WTC11 (cell line): ENCODE measurements at regions of chr2 and their contacts with region 1.

Region 1: GRCh38 chr2:25309402-25309801 is 32.3 kb downstream of the DNMT3A start:
- DNase-seq: peak; percentile 78
- ATAC-seq: peak; percentile 57
- H3K4me3 Mint-ChIP-seq: no peak overlapping the region
- H3K27ac Mint-ChIP-seq: 0 out of 2 replicates have a peak overlapping the region, but pooled peaks have one; percentile 5
- H3K4me1 Mint-ChIP-seq: peaks cover 55% of the 10 kb centered on the region
- H3K27me3 Mint-ChIP-seq: no peaks in the 10 kb centered on the region
- CTCF ChIP-seq: no peak; the same call in 1 of the 2 replicates

Region 2: GRCh38 chr2:24351981-24352380 is 957.4 kb before region 1 on chr2:
- CTCF ChIA-PET with region 1: no interaction called
- POLR2A ChIA-PET with region 1: no interaction called
- DNase-seq: no peak
- ATAC-seq: no peak; the same call in 1 of the 2 replicates
- H3K4me3 Mint-ChIP-seq: no peak overlapping the region
- H3K27ac Mint-ChIP-seq: no peak overlapping the region
- H3K4me1 Mint-ChIP-seq: no peaks in the 10 kb centered on the region; the same call in 1 of the 2 replicates
- H3K27me3 Mint-ChIP-seq: no peaks in the 10 kb centered on the region
- CTCF ChIP-seq: no peak

Region 3: GRCh38 chr2:25228848-25229278 is 80.5 kb before region 1 on chr2:
- CTCF ChIA-PET with region 1: interaction called, 11 read pairs
- POLR2A ChIA-PET with region 1: no interaction called
- DNase-seq: peak; percentile 87
- ATAC-seq: peak; percentile 91
- H3K4me3 Mint-ChIP-seq: no peak overlapping the region
- H3K27ac Mint-ChIP-seq: peak overlapping the region; percentile 87
- H3K4me1 Mint-ChIP-seq: peaks cover 41% of the 10 kb centered on the region
- H3K27me3 Mint-ChIP-seq: no peaks in the 10 kb centered on the region
- CTCF ChIP-seq: peak; percentile 83

Region 4: DNA sequence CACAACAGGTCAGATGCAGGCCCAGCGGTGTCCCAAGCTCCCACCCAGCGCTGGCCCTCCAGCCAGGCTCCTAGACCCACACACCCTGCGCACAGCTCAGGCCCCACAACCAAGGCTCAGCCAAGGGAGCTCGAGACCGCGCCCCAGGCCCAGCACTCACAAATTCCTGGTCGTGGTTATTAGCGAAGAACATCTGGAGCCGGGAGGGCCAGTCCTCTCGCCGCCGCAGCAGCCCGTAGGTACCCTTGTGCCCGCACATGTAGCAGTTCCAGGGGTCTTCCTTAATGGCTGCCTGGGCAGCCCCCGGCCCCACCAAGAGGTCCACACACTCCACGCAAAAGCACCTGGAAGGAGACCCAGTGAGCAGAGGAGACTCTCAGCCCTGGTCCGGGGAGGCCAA is 65.4 kb before region 1 on chr2:
- CTCF ChIA-PET with region 1: no interaction called
- POLR2A ChIA-PET with region 1: no interaction called
- DNase-seq: no peak
- ATAC-seq: no peak
- H3K4me3 Mint-ChIP-seq: no peak overlapping the region
- H3K27ac Mint-ChIP-seq: no peak overlapping the region
- H3K4me1 Mint-ChIP-seq: peaks cover 5% of the 10 kb centered on the region
- H3K27me3 Mint-ChIP-seq: no peaks in the 10 kb centered on the region
- CTCF ChIP-seq: no peak

Region 5: DNA sequence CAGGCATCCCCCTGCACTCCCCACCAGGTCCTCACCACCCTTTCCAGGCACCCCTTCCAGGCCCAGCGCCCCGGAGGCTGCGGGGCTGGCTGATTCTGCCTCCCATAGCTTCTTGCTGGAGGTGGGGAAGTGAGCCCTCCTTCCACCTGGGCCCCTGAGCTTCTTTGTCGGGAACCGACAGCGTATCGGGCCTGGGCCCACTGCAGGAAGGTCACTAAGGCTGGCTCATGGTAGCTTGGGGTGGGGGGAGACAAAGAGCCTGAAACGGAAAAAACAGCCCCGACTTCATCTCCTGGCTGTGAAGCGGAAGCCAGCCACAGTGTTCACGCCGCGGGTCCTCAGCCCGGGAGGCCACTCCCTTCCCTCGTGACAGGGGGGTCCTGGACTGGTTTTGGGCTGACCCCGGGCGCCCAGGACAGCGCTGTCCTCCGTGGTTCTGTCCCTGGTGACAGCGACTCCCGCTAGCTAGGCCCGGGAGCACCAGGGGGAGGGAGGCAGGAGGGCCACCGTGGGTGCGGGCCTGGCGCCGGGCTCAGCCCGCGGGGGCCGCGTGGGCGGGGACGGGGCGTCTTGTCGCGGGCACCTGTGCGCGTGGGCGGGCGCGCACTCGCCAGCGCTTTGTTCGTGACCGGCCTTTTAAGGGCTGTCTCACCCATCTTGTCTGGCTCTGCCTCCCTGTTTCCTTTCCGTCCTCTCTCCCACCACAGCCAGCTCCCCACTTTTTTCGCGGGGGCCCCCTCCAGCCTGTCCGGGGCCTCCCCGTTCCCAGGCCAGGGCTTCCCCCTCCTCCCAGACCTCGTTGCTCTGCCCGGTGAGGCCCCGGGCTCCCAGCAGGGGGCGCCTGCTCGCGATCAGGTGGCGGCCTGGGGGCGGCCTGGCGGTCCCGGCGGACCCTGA is 32.6 kb before region 1 on chr2:
- CTCF ChIA-PET with region 1: interaction called, 40 read pairs
- POLR2A ChIA-PET with region 1: interaction called, 3 read pairs
- DNase-seq: peak; percentile 81
- ATAC-seq: peak; percentile 47
- H3K4me3 Mint-ChIP-seq: peak overlapping the region; percentile 47
- H3K27ac Mint-ChIP-seq: no peak overlapping the region
- H3K4me1 Mint-ChIP-seq: peaks cover 64% of the 10 kb centered on the region
- H3K27me3 Mint-ChIP-seq: no peaks in the 10 kb centered on the region; the same call in 1 of the 2 replicates
- CTCF ChIP-seq: peak; percentile 73

Region 6: DNA sequence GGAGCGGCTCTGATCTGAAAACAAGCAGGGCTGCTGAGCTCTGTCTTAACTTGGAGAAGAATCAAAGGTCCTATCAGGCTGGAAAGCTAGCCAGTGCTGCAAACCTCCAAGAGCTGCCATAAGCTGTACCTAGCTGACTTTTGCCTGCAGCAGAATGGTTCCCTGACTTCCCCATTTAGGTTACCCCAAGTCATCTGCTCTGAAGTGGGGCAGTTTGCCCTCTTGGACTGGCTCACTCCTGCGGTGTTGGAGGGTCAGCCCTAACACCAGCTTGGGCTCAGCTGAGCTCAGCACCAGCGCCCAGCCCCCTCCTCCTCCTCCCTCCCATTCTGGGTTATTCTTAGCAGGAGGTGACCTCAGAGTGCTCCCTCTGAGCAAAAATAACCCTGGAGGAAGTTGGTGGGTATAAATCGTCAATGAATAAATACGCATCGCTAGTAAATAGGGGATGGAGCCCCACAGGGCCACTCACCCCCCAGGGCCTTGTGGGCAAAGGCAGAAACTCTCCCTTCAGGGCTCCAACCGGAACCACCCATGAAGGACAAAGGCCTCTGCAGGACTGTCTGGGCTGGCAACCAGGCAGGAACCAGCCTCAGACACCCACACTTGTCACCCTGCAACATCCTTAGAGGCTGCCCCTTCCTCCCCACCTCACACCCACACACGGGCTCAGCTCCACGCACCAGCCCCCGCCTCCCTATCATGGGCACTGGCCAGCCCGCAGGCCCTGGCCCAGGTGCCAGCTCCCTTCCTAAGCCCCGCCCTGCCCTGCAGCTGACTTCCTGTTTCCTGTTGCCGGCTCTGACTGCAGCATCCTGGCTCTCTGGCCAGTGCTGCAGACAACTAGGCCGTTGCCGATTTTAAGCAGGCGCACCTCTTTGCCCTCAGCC is 14.6 kb before region 1 on chr2:
- CTCF ChIA-PET with region 1: interaction called, 10 read pairs
- POLR2A ChIA-PET with region 1: no interaction called
- DNase-seq: no peak
- ATAC-seq: peak; percentile 64
- H3K4me3 Mint-ChIP-seq: no peak overlapping the region
- H3K27ac Mint-ChIP-seq: 0 out of 2 replicates have a peak overlapping the region, but pooled peaks have one; percentile 65
- H3K4me1 Mint-ChIP-seq: peaks cover 26% of the 10 kb centered on the region
- H3K27me3 Mint-ChIP-seq: no peaks in the 10 kb centered on the region
- CTCF ChIP-seq: no peak

Region 7: DNA sequence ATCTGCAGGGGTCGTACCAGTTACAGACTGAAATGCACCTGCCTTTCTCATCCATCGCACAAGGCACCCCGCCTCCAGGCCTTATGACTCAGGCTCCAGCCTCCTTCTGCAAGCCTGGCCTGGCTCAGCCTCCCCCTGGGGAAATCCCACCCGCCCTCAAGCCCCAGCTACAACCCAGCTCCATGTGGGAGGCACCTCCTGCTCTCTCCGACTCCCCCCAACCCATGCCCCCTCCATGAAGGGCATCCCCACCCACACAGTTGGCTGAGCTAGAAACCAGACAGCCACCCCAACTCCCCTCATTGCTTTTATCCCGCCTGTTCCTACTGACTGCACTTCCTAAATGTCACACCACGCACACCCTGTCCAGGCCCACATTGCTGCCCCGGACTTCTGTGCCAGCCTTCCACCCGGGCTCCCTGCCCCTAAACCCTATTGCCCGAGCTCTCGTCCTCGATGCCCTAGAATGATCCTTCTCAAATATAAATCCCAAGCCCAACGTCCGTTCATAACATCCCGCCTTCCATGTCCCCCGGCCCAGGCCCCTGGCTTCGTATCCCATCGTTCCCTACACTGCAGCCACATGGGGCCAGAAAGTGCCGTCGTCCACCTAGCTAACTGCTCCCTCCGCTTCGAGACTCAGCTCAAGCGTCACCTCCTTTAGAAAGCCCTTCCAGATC is 22.4 kb after region 1 on chr2:
- CTCF ChIA-PET with region 1: interaction called, 64 read pairs
- POLR2A ChIA-PET with region 1: interaction called, 7 read pairs
- DNase-seq: no peak
- ATAC-seq: no peak
- H3K4me3 Mint-ChIP-seq: no peak overlapping the region
- H3K27ac Mint-ChIP-seq: no peak overlapping the region
- H3K4me1 Mint-ChIP-seq: peaks cover 44% of the 10 kb centered on the region
- H3K27me3 Mint-ChIP-seq: no peaks in the 10 kb centered on the region
- CTCF ChIP-seq: no peak

Region 8: GRCh38 chr2:25342372-25343186 is 33.2 kb after region 1 on chr2:
- CTCF ChIA-PET with region 1: interaction called, 64 read pairs
- POLR2A ChIA-PET with region 1: interaction called, 3 read pairs
- DNase-seq: peak; percentile 95
- ATAC-seq: peak; percentile 83
- H3K4me3 Mint-ChIP-seq: peak overlapping the region; percentile 65
- H3K27ac Mint-ChIP-seq: no peak overlapping the region
- H3K4me1 Mint-ChIP-seq: peaks cover 29% of the 10 kb centered on the region
- H3K27me3 Mint-ChIP-seq: peaks cover 28% of the 10 kb centered on the region
- CTCF ChIP-seq: peak; percentile 93

Region 9: DNA sequence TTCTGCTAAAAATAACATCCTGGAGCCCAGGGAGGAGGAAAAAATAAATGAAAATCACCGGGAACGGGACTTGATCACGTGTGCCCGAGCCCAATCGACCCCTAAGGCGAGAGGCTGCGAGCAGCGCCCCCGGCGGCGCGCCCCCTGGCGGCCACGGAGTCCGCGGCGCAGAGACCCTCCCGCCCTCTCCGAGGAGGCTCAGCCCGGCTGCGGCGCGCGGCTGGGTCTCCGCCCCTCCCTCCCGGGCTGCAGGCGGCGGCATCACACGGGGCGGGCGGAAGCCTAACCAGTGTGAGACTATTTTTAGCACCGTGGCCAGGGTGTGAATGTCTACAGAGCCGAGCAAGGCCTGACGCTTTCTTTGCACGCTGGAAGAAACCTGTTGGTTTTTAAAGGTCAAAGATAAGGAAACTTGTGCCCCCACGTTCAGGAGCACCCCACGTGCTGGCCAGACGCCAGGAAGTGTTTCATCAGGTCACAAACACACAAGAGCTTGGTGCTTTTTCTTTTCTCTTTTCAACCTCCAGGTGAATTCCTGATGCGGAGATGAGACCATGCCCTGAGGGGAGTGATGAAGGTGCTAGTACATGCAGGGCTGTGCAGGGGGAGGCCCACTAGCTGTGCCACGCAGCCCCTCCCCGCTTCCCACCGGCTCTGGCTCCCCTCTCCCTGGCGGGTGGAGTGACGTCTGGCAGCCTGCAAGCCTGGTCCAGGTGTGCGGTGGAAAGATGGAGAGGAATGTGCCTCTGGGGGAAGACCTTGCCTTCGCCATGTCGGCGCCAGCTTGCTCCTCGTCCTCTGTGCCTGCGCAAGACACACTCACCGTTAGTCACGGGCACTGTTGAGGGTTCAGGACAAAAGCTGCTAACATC is 67.6 kb after region 1 on chr2:
- CTCF ChIA-PET with region 1: interaction called, 21 read pairs
- POLR2A ChIA-PET with region 1: no interaction called
- DNase-seq: peak; percentile 92
- ATAC-seq: peak; percentile 95
- H3K4me3 Mint-ChIP-seq: peak overlapping the region; percentile 52
- H3K27ac Mint-ChIP-seq: peak overlapping the region; percentile 48; the same call in 1 of the 2 replicates
- H3K4me1 Mint-ChIP-seq: peaks cover 16% of the 10 kb centered on the region
- H3K27me3 Mint-ChIP-seq: peaks cover 26% of the 10 kb centered on the region
- CTCF ChIP-seq: peak; percentile 91